ENCODE measurements at regions of chr4 and their contacts with region 1.

Region 1: GRCh38 chr4:182465979-182466378 is 222.8 kb downstream of the TENM3 start:
- DNase-seq: no peak
- ATAC-seq: no peak
- H3K4me3 ChIP-seq: no peak overlapping the region
- H3K27ac ChIP-seq: no peak overlapping the region
- H3K4me1 ChIP-seq: no peaks in the 10 kb centered on the region
- H3K27me3 ChIP-seq: no peaks in the 10 kb centered on the region

Region 2: DNA sequence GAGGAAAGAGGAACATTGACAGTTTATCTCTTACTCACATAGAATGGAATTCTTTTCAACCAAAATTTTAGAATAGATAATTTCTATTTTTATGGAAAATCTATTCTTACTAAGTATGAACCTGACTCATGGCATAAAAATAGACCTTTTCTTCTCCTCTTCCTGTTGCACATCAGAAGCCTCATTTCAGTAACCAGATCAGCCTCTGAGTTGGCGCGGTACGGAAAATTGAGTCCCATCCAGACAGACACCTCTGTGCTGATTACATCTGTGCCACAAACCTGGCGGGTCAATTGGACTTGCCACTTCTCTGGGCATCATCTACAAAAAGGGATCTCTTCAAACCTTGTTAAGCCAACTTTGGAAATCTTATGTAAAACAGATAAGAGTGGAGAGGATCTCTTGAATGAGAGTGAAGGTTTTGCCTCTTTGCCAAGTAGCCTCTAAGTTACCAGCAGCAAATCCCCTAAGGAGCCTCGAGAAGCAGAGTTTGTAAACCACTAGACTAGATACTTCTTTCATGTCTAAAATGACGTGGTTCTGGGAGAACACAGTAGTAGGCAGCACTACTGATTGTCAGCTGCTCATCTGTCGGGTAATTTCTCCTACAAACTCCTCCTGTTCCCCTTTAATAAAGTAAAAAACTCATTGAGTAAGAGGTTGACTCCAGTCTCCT is 185.4 kb before region 1 on chr4:
- intact Hi-C with region 1: loop called in 1 of 2 experiments (anchors 5 kb)
- DNase-seq: no peak
- ATAC-seq: no peak
- H3K4me3 ChIP-seq: no peak overlapping the region
- H3K27ac ChIP-seq: no peak overlapping the region
- H3K4me1 ChIP-seq: no peaks in the 10 kb centered on the region
- H3K27me3 ChIP-seq: no peaks in the 10 kb centered on the region

Region 3: GRCh38 chr4:182427554-182427953 is 38.4 kb before region 1 on chr4:
- intact Hi-C with region 1: no loop called
- DNase-seq: no peak
- ATAC-seq: no peak
- H3K4me3 ChIP-seq: no peak overlapping the region
- H3K27ac ChIP-seq: no peak overlapping the region
- H3K4me1 ChIP-seq: no peaks in the 10 kb centered on the region
- H3K27me3 ChIP-seq: no peaks in the 10 kb centered on the region

Region 4: GRCh38 chr4:182504463-182504862 is 38.5 kb after region 1 on chr4:
- intact Hi-C with region 1: no loop called
- DNase-seq: no peak
- ATAC-seq: no peak
- H3K4me3 ChIP-seq: no peak overlapping the region
- H3K27ac ChIP-seq: no peak overlapping the region
- H3K4me1 ChIP-seq: no peaks in the 10 kb centered on the region
- H3K27me3 ChIP-seq: no peaks in the 10 kb centered on the region

Region 5: DNA sequence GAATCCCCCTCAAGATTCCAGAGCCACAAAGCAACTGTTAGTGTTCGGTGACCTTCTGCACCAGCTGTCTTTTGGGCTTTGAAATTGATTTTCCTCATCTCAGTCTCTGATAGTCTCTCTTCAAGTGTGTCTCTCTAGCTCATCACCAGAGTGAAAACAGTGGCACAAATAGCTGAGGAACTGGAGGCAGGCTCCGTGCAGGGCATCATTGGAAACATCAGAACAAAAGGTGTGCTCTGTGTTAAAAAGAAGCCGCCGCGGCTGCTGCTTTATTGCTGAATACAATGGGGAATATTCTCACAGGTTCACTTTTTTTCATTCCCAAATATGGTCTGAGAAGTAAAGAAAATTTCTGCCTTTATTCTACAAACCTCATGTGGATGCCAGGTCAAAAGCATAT is 153.7 kb after region 1 on chr4:
- intact Hi-C with region 1: no loop called
- DNase-seq: no peak
- ATAC-seq: no peak
- H3K4me3 ChIP-seq: no peak overlapping the region
- H3K27ac ChIP-seq: no peak overlapping the region
- H3K4me1 ChIP-seq: no peaks in the 10 kb centered on the region
- H3K27me3 ChIP-seq: no peaks in the 10 kb centered on the region